Tibial artery (tissue), 4 donors: ENCODE measurements at regions of chr20 and their contacts with region 1.

Region 1: GRCh38 chr20:58980700-58981627 is at the start of gene NELFCD:
- DNase-seq: peak; percentile 78 to 91
- H3K4me3 ChIP-seq: peak within 1 kb of the TSS; percentile 62 to 66
- H3K27ac ChIP-seq: peak within 1 kb of the TSS; percentile 85
- H3K4me1 ChIP-seq: peaks cover 0 to 38% (median 27%) of the 10 kb centered on the region in 4 donors
- H3K27me3 ChIP-seq: no peaks in the 10 kb centered on the region
- CTCF ChIP-seq: no peak

Region 2: DNA sequence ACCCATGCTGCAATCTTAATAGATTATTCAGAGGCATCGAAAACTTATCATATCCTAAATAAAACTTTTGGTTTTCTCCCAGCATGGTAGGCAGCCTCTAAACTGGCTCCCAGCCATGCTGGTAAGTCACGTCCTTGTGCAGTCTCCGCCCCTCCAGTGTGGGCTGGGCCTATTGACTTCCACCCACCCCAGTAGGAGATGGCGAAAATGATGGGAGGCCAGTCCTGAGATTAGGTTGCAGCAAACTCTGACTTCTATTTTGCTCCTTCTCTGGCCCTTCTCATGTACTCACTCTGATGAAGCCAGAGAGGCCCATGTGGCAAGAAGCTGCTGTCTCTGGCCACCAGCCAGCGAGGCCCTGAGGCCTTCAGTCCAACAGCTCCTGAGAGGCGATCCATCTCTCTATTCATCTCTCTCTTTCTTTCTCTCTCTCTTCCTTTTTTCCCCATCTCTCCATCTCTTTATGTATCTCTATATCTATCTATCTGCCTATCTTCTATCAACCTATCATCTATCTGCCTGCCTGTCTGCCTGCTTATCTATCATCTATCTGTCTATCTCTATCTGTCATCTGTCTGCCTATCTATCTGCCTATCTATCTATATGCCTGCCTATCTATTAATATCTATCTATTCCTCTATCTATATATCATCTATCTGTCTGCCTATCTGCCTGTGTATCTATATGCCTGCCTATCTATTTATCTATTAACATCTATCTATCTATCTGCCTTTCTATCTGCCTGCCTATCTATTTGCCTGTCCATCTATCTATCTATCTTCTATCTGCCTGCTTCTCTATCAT is 382.6 kb before region 1 on chr20:
- intact Hi-C with region 1: no loop called
- DNase-seq: peak; percentile 63 to 78
- H3K4me3 ChIP-seq: no peak overlapping the region
- H3K27ac ChIP-seq: peak overlapping the region; percentile 48 to 64
- H3K4me1 ChIP-seq: peaks cover 0 to 20% (median 11%) of the 10 kb centered on the region in 4 donors
- H3K27me3 ChIP-seq: no peaks in the 10 kb centered on the region
- CTCF ChIP-seq: no peak

Region 3: GRCh38 chr20:58746620-58747019 is 234.3 kb before region 1 on chr20:
- intact Hi-C with region 1: no loop called
- DNase-seq: no peak
- H3K4me3 ChIP-seq: no peak overlapping the region
- H3K27ac ChIP-seq: no peak overlapping the region
- H3K4me1 ChIP-seq: no peaks in the 10 kb centered on the region
- H3K27me3 ChIP-seq: peaks cover 0 to 37% of the 10 kb centered on the region in 2 donors
- CTCF ChIP-seq: no peak

Region 4: GRCh38 chr20:58888521-58889333 is 92.2 kb before region 1 on chr20:
- intact Hi-C with region 1: loop called (anchors 5 kb)
- DNase-seq: peak; percentile 70 to 89
- H3K4me3 ChIP-seq: peak overlapping the region; percentile 91 to 97
- H3K27ac ChIP-seq: peak overlapping the region; percentile 100
- H3K4me1 ChIP-seq: peaks cover 0 to 17% (median 9%) of the 10 kb centered on the region in 4 donors
- H3K27me3 ChIP-seq: no peaks in the 10 kb centered on the region
- CTCF ChIP-seq: no peak

Region 5: DNA sequence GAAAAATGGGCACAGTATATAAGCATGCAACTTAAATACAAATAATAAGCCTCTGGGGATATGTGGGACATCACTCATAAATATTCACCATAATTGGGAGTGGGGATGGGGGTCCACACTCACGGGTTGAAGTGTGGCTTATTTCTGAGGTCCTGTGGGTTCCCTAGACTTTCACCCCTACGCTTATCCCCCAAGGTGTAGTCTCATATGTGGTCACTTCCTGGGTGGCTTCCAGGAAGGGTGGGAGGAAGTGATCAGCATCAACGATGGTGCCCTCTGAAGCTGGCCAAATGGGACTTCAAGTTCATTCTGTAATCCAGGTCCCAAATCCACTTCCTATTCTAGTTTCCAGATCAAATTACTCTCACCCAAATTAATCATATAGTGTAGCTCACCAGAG is 69.0 kb before region 1 on chr20:
- intact Hi-C with region 1: loop called (anchors 5 kb)
- DNase-seq: no peak
- H3K4me3 ChIP-seq: no peak overlapping the region
- H3K27ac ChIP-seq: no peak overlapping the region
- H3K4me1 ChIP-seq: peaks cover 5 to 38% (median 20%) of the 10 kb centered on the region in 4 donors
- H3K27me3 ChIP-seq: no peaks in the 10 kb centered on the region
- CTCF ChIP-seq: no peak

Region 6: GRCh38 chr20:59032023-59032712 is 51.2 kb after region 1 on chr20 and contains the start of gene ATP5F1E:
- intact Hi-C with region 1: loop called (anchors 5 kb)
- DNase-seq: peak; percentile 96 to 98
- H3K4me3 ChIP-seq: peak within 1 kb of the TSS; percentile 78 to 93
- H3K27ac ChIP-seq: peak within 1 kb of the TSS; percentile 85 to 86
- H3K4me1 ChIP-seq: peaks cover 0 to 44% (median 36%) of the 10 kb centered on the region in 4 donors
- H3K27me3 ChIP-seq: no peaks in the 10 kb centered on the region
- CTCF ChIP-seq: no peak